ENCODE measurements at regions of chr11 and their contacts with region 1.

Region 1: GRCh38 chr11:73034777-73035176 is 107.3 kb downstream of the FCHSD2 start:
- DNase-seq: no peak
- ATAC-seq: peak; percentile 31
- H3K4me3 ChIP-seq: peak overlapping the region; percentile 22
- H3K4me3 Mint-ChIP-seq: peak overlapping the region; percentile 17 to 83 (median 72)
- H3K27ac ChIP-seq: no peak overlapping the region
- H3K27ac Mint-ChIP-seq: peak overlapping the region; percentile 61 to 90 (median 78)
- H3K4me1 ChIP-seq: peaks cover 8 to 20% of the 10 kb centered on the region in 2 donors
- H3K4me1 Mint-ChIP-seq: peaks cover 23 to 70% (median 57%) of the 10 kb centered on the region in 7 donors
- H3K27me3 ChIP-seq: no peaks in the 10 kb centered on the region
- H3K27me3 Mint-ChIP-seq: no peaks in the 10 kb centered on the region

Region 2: DNA sequence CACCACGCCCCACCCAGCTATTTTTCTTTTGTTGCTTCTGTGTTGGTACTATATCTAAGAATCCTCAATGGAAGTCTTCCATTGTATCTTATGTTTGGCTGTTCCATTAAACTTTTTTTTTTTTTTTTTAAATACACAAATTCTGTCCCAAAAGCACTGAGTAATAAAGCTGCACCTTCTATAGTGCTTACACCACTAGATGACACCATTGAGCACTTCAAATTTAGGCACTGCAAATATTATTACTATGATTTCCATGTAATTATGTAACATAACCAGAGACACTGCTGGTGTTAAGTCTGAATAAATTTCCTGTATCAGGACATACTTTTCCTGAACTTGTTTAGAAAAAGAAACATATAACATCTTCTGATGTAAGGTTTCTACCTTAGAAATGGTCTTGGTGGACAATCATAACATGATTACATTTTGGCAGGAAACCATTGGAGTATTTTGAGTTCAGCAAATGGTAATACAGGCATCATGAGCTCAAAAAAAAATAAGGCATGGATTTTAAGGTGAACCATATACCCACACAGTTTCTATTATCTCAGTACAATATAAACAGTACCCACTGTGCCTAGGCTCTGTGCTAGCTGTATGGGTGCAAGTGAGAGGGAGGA is 110.1 kb before region 1 on chr11:
- CTCF ChIA-PET with region 1: no interaction called
- POLR2A ChIA-PET with region 1: no interaction called
- intact Hi-C with region 1: loop called in 1 of 2 experiments (anchors 10 kb)
- DNase-seq: peak in 5 of 9 donors; percentile 18 to 49 (median 41)
- ATAC-seq: peak; percentile 61
- H3K4me3 ChIP-seq: no peak overlapping the region
- H3K4me3 Mint-ChIP-seq: no peak overlapping the region
- H3K27ac ChIP-seq: no peak overlapping the region
- H3K27ac Mint-ChIP-seq: peak overlapping the region in 5 of 9 donors; percentile 20 to 65 (median 34)
- H3K4me1 ChIP-seq: no peaks in the 10 kb centered on the region
- H3K4me1 Mint-ChIP-seq: peaks cover 4 to 18% (median 12%) of the 10 kb centered on the region in 7 donors
- H3K27me3 ChIP-seq: no peaks in the 10 kb centered on the region
- H3K27me3 Mint-ChIP-seq: no peaks in the 10 kb centered on the region

Region 3: DNA sequence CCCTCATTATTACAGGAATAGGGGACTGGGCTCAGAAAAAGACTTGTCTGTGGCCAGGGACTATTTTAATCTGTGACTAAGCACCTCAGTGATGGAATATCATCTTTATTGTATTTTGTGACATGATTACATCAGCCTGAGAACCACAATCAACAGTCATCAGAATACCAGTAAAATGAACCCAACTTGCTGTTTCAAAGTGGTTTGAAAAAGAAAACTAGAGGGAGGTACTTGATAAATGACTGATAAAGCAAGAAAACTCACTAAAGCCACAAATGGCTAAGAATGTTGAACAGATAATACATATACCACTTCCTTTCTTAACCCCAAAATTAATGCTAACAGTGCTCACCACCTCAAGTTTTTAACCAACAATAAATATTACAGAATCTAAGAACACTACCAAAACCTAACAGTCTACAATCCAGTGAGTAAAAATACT is 64.9 kb before region 1 on chr11:
- CTCF ChIA-PET with region 1: no interaction called
- POLR2A ChIA-PET with region 1: no interaction called
- intact Hi-C with region 1: loop called in 1 of 2 experiments (anchors 1 kb)
- DNase-seq: no peak
- ATAC-seq: peak; percentile 77
- H3K4me3 ChIP-seq: no peak overlapping the region
- H3K4me3 Mint-ChIP-seq: peak overlapping the region in 1 of 10 donors; percentile 42
- H3K27ac ChIP-seq: no peak overlapping the region
- H3K27ac Mint-ChIP-seq: peak overlapping the region in 1 of 9 donors; percentile 47
- H3K4me1 ChIP-seq: peaks cover 0 to 15% of the 10 kb centered on the region in 2 donors
- H3K4me1 Mint-ChIP-seq: peaks cover 6 to 51% (median 22%) of the 10 kb centered on the region in 7 donors
- H3K27me3 ChIP-seq: no peaks in the 10 kb centered on the region
- H3K27me3 Mint-ChIP-seq: no peaks in the 10 kb centered on the region